BJ (cell line): ENCODE measurements at regions of chr14 and their contacts with region 1.

Region 1: DNA sequence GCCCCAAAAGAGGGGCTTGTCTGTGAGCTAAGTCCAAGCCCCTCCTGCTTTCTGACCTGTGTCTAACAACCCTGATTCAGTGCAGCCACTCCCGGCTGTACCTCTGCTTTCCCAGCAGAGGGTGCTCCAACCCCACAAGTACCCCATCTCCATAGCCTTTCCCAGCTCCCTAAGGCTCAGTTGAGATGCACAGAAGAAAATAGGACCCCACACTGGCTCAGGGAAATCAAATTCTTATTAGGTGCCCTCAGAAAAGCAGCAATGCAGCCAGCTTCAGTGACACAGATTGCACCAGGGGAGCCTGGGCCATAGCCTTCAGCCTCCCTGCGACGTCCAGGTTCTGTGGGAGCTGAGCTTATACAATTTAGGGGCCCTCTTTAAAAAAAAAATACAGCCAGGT is 49.9 kb downstream of the LRRC74A start:
- DNase-seq: no peak
- H3K4me3 ChIP-seq: no peak overlapping the region
- H3K27me3 ChIP-seq: peaks cover 1% of the 10 kb centered on the region; the same call in 1 of the 2 replicates
- CTCF ChIP-seq: peak; percentile 93

Region 2: DNA sequence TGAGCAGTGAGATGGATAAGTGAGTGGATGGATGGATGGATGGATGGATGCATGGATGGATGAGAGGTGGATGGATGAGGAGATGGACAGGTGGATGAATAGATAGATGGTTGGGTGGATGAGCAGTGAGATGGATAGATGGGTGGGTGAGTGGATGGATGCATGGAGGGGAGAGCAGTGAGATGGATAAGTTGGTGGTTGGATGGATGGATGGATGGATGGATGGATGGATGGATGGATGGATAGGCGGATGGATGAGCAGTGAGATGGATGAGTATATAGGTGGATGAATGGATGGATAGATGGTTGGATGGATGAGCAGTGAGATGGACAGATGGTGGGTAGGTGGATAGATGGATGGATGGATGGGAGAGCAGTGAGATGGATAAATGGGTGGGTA is 19.3 kb before region 1 on chr14:
- CTCF ChIA-PET with region 1: interaction called, 13 read pairs
- POLR2A ChIA-PET with region 1: no interaction called
- DNase-seq: no peak
- H3K4me3 ChIP-seq: no peak overlapping the region
- H3K27me3 ChIP-seq: peaks cover 16% of the 10 kb centered on the region
- CTCF ChIP-seq: no peak

Region 3: DNA sequence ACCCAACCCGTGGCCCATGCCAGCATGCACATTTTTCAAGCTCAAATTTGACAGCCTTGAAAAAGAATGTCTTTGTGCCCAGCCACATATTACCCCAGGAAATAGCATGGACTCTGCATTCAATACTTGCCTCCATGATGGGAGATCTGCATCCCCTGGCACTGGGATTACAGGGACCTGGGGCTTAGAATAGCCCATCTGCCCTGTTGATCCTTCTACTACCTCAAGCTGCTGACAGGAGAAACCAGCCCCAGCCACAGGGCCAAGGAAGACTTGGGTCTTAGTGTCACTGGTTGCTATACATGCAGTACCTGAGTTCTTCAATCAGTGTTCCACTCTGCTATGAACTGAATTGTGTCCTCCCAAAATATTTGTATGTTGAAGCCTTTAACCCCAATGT is 35.4 kb after region 1 on chr14:
- CTCF ChIA-PET with region 1: interaction called, 70 read pairs
- POLR2A ChIA-PET with region 1: no interaction called
- DNase-seq: no peak
- H3K4me3 ChIP-seq: no peak overlapping the region
- H3K27me3 ChIP-seq: no peaks in the 10 kb centered on the region
- CTCF ChIP-seq: no peak

Region 4: DNA sequence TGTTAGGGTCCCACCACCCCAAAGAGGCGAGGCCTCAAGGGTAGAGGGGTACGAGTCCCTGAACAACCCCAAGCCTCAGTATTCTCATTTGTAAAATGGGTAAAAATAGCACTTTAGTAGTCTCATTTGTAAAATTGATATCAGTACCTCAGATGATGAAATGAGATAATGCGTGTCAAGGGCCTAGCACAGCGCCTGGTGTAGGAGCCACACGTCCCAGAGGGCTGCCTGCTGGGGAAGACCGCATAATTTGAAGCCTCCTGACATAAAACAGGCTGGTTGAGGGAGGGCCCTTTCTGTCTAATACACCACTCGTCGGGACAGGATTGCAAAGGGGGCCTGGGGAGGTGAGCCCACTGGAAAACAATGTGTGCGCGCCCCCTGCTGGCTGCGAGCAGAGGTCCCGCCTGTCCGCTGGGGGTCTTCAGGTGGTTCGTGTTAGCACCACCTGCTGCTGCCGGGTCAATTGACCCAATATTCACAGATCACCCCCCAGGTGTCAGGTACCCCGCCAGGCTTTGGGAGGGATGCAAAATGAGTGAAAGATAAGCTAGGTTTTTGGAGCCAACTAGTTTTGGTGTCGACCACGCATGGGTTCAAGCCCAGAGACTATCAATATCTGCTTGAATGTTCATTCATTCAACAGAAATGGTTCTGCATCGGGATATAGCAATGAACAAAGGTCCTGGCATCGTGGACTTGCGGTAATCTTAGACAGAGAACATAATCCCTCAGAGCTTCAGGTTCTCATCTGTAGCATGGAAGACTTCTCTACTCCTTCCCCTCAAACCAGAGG is 177.2 kb after region 1 on chr14:
- CTCF ChIA-PET with region 1: interaction called, 58 read pairs
- POLR2A ChIA-PET with region 1: no interaction called
- DNase-seq: no peak
- H3K4me3 ChIP-seq: no peak overlapping the region
- H3K27me3 ChIP-seq: no peaks in the 10 kb centered on the region
- CTCF ChIP-seq: peak; percentile 90

Region 5: GRCh38 chr14:77067632-77068514 is 191.8 kb after region 1 on chr14:
- CTCF ChIA-PET with region 1: interaction called, 396 read pairs
- POLR2A ChIA-PET with region 1: no interaction called
- DNase-seq: no peak
- H3K4me3 ChIP-seq: no peak overlapping the region
- H3K27me3 ChIP-seq: no peaks in the 10 kb centered on the region
- CTCF ChIP-seq: peak; percentile 94

Region 6: DNA sequence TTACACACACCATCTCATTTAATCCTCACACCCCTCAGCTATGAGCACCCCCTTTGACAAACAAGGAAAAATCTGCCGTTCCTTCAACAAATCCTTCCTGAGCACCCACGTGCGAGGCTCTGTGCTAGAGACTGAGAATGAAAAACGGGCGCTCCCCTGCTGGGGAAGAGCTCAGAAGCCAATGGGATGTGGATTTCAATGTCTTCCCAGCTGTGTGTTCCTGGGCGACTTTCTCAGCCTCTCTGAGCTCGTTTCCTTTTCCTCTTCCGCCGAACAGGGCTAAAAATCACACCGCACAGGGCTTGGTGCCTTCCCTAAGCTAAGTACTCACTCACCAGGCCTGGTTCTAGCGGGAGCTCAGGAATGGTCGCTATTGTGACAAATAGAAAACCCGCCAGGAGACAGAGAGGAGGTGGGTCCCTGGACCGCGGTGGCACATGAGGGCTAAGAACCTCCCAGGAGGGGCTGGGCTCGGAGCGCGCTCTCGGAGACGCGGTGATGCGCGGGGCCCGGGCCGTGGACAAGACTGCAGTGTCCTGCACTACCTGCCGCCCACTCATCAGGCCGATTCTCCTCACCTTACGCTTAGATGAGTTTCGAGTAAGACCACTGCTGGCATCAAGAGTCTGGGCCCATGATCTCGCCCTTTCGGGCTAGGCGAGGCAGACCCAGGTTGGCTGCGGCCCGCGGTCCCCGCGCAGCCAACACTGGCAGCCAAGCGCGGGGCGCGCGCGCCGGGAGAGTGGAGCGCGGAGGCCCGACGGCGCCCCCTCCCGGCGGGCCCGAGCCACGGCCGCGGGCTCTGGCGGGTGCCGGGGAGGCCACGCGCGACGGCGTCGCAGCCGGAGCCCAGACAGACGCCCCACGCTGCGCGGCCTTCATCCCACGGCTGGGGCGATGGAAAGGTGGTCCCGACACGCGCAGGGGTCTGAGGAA is 248.5 kb after region 1 on chr14:
- CTCF ChIA-PET with region 1: interaction called, 30 read pairs
- POLR2A ChIA-PET with region 1: no interaction called
- DNase-seq: no peak
- H3K4me3 ChIP-seq: peak overlapping the region; percentile 45
- H3K27me3 ChIP-seq: peaks cover 19% of the 10 kb centered on the region
- CTCF ChIP-seq: no peak

Region 7: DNA sequence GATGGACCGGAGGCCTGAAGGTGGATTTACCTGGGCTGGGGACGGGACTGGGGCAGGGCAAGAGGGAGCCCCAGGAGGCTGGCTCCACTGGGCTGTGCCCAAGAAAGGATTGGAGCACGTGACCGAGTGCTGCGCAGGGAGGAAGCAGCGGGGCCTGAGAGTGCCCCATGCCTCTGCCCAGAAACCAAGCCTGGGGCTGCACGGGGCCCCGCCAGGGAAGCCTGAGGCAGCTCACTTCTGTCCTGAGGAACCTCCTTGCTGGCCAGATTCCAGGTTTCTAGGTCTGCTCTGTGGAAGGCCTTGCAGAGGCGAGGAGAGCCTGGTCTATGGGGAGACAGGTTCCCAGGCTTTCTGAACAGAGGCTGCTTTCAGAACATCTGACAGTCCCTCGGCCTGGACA is 384.6 kb after region 1 on chr14:
- CTCF ChIA-PET with region 1: no interaction called
- POLR2A ChIA-PET with region 1: no interaction called
- DNase-seq: no peak
- H3K4me3 ChIP-seq: no peak overlapping the region
- H3K27me3 ChIP-seq: peaks cover 11% of the 10 kb centered on the region
- CTCF ChIP-seq: no peak

Region 8: GRCh38 chr14:77314043-77314442 is 438.0 kb after region 1 on chr14:
- CTCF ChIA-PET with region 1: interaction called, 11 read pairs
- POLR2A ChIA-PET with region 1: no interaction called
- DNase-seq: peak; percentile 97
- H3K4me3 ChIP-seq: no peak overlapping the region
- H3K27me3 ChIP-seq: no peaks in the 10 kb centered on the region
- CTCF ChIP-seq: no peak